ENCODE measurements at regions of chr2 and their contacts with region 1.

Region 1: GRCh38 chr2:196176142-196176738 is 4.9 kb upstream of the STK17B start:
- DNase-seq: peak; percentile 96
- ATAC-seq: peak; percentile 43
- H3K4me3 Mint-ChIP-seq: peak overlapping the region; percentile 99
- H3K27ac Mint-ChIP-seq: peak overlapping the region; percentile 95
- H3K4me1 Mint-ChIP-seq: peaks cover 74% of the 10 kb centered on the region
- H3K27me3 Mint-ChIP-seq: no peaks in the 10 kb centered on the region

Region 2: GRCh38 chr2:196046123-196046917 is 129.9 kb before region 1 on chr2:
- CTCF ChIA-PET with region 1: no interaction called
- DNase-seq: no peak
- ATAC-seq: peak; percentile 42
- H3K4me3 Mint-ChIP-seq: no peak overlapping the region
- H3K27ac Mint-ChIP-seq: no peak overlapping the region
- H3K4me1 Mint-ChIP-seq: peaks cover 11% of the 10 kb centered on the region
- H3K27me3 Mint-ChIP-seq: peaks cover 21% of the 10 kb centered on the region

Region 3: DNA sequence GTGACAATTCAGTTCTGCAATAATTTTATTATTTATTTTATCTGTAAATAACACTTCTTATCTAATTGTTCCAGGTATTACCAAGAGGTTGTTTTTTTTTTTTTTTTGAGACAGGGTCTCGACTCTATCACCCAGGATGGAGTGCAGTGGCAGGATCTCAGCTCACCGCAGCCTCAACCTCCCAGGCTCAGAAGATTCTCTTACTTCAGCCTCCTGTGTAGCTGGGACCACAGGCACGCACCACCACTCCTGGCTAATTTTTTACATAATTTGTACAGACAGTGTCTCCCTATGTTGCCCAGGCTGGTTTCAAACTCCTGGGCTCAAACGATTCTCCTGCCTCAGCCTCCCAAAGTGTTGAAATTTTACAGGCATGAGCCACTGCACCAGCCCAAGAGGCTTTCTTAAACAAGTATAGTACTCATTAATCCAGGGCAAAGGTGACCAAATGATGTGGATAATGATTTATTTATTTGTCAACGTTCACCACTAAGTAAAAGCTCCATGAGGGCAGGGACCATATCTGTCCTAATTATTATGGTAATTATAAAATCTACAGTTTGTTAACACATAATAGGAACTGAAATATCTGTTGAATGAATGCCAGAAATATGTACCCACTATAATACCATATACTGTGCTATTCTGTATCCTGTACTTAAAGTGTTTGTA is 16.9 kb before region 1 on chr2:
- CTCF ChIA-PET with region 1: interaction called, 12 read pairs
- DNase-seq: peak; percentile 80
- ATAC-seq: peak; percentile 34
- H3K4me3 Mint-ChIP-seq: peak overlapping the region; percentile 99
- H3K27ac Mint-ChIP-seq: peak overlapping the region; percentile 93
- H3K4me1 Mint-ChIP-seq: peaks cover 60% of the 10 kb centered on the region
- H3K27me3 Mint-ChIP-seq: no peaks in the 10 kb centered on the region

Region 4: DNA sequence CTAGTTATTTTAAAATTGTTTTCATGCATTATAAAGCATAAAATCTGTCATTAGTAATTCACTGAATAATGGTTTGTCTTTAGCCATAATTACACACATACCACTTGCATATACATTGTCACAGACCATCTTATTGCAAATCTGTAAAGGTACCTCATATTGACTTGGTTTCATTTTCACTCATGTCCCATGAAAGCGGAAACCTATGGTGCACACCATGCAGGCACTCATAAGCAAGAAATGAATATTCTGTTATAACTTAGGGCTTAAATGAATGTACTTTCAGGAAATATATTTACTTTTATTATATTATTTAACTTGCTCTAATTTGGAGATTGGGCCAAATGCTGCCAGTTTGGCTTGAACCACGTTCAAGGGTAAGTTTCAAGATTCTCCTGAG is 24.3 kb after region 1 on chr2:
- CTCF ChIA-PET with region 1: interaction called, 37 read pairs
- DNase-seq: peak; percentile 79
- ATAC-seq: peak; percentile 98
- H3K4me3 Mint-ChIP-seq: peak overlapping the region; percentile 70
- H3K27ac Mint-ChIP-seq: peak overlapping the region; percentile 92
- H3K4me1 Mint-ChIP-seq: peaks cover 56% of the 10 kb centered on the region
- H3K27me3 Mint-ChIP-seq: no peaks in the 10 kb centered on the region

Region 5: GRCh38 chr2:196233021-196233804 is 57.0 kb after region 1 on chr2:
- CTCF ChIA-PET with region 1: interaction called, 49 read pairs
- DNase-seq: no peak
- ATAC-seq: no peak
- H3K4me3 Mint-ChIP-seq: no peak overlapping the region
- H3K27ac Mint-ChIP-seq: peak overlapping the region; percentile 87
- H3K4me1 Mint-ChIP-seq: peaks cover 91% of the 10 kb centered on the region
- H3K27me3 Mint-ChIP-seq: no peaks in the 10 kb centered on the region

Region 6: DNA sequence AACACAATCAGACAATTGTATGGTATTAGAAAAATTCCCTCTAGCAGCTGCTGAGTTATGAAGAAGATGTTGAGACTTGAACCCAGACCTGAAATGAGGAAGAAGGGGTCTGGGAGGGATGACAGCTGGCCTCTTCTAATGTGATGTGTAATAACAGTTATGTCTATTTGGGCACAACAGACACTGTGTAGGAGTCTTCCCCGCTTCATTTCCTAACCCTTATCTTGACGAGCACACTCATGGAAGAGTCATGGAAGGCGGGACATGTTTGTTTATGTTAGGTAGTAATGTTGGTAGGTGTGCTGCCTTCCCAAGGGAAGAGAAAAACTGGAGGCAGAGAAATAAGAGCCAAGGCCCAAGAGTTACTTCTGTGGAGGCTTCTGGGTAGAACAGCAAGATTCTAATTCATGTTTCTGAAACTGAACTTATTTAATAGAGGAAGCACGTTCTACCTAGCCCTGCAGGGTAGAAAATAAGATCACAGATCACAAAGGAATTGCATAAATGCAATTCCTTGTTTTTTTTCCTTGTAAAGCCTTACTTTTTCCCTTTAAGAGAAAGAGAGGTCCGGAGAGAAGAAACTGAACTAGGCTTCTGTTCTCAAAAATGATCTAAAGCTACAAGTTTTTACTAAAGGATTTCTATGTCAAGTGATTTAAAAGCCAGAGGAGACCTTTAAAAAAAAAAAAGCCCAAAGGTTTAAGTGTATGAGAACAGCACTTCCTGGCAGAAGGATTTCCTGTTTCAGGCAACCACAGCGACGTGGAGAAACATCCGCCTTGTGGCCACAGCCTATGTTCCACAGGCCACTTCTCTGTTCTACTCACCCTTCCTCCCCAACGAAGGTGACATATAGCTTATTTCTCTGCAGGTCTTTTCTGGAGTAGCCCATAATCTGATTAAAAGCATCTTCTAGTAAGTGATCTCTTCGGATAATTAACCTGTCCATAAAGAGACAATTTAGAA is 63.7 kb after region 1 on chr2:
- CTCF ChIA-PET with region 1: interaction called, 49 read pairs
- DNase-seq: peak; percentile 96
- ATAC-seq: peak; percentile 66
- H3K4me3 Mint-ChIP-seq: peak overlapping the region; percentile 71
- H3K27ac Mint-ChIP-seq: peak overlapping the region; percentile 100
- H3K4me1 Mint-ChIP-seq: peaks cover 83% of the 10 kb centered on the region
- H3K27me3 Mint-ChIP-seq: no peaks in the 10 kb centered on the region

Region 7: GRCh38 chr2:196263181-196263747 is 87.0 kb after region 1 on chr2:
- CTCF ChIA-PET with region 1: interaction called, 33 read pairs
- DNase-seq: peak; percentile 77
- ATAC-seq: peak; percentile 76
- H3K4me3 Mint-ChIP-seq: peak overlapping the region; percentile 59
- H3K27ac Mint-ChIP-seq: peak overlapping the region; percentile 93
- H3K4me1 Mint-ChIP-seq: peaks cover 81% of the 10 kb centered on the region
- H3K27me3 Mint-ChIP-seq: no peaks in the 10 kb centered on the region

Region 8: DNA sequence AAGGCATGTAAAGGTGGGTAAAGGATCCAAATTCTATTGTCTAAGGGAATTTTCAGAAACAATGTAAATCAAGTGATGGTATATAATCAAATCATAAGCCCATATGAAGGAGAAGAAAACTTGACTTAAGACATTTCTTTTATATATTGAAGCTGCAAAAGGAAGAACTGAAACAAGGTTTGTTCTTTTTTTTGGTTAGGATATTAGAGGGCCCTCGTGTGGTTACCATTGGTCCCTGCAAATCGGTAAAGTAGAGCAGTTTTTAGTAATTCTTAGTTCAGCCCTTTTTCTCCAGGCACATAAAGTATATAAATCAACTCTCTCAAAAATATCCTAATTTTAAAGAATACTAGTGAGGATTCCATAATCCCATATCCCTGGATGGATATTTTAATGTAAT is 100.8 kb after region 1 on chr2:
- CTCF ChIA-PET with region 1: interaction called, 23 read pairs
- DNase-seq: no peak
- ATAC-seq: peak; percentile 31
- H3K4me3 Mint-ChIP-seq: peak overlapping the region; percentile 11
- H3K27ac Mint-ChIP-seq: peak overlapping the region; percentile 52
- H3K4me1 Mint-ChIP-seq: peaks cover 42% of the 10 kb centered on the region
- H3K27me3 Mint-ChIP-seq: no peaks in the 10 kb centered on the region